ENCODE measurements at regions of chr14 and their contacts with region 1.

Region 1: GRCh38 chr14:52835122-52835903 is 43.9 kb upstream of the GNPNAT1 start:
- DNase-seq: peak; percentile 67
- ATAC-seq: peak; percentile 93
- H3K4me3 ChIP-seq: no peak overlapping the region
- H3K27ac ChIP-seq: peak overlapping the region; percentile 33
- H3K4me1 ChIP-seq: peaks cover 24% of the 10 kb centered on the region
- H3K27me3 ChIP-seq: no peaks in the 10 kb centered on the region
- CTCF ChIP-seq: no peak

Region 2: DNA sequence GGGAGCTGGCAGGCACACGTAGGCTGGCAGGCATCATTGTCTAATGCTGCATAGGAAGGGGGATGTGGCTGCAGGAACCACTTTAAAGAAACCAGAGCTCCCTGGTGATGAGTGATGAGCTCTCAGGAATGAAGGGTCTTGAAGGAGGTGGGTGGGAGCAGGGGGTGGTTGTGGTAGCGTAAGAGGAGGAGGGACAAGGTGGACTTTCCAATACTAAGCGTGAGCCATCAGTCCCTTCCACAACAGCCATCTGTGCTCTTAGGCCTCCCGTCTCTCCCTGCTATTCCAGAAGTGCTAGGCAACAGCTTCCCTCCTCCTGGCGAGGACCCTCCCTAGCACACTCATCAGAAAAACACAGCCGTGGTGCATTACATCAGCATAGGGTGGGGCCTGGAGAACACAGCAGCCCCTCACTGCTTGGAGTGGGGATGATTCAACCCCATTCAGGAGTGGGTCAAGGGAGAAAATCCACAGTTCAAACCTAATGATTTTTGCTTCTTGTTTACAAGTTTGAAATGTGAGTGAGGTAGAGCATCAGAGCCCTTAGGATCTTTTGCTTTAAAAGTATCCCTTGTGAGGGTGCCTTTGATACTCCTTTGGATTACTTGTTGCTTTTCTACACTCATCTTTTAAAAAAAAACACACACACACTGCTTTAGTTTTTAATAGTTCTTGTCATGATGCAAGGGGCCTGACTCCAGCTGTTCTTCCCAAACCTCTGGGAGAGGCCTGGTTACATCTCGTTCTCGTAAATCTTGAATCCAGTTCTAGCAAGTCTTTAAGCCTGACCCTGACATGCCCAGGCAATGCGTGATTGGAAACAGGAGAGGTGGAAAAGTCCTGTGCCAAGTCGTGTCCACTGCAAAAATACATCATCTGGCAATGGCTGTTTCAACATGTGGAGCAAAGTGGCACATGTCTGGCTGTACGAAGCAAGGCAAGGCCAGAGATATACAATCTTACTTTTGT is 674.2 kb after region 1 on chr14:
- CTCF ChIA-PET with region 1: no interaction called
- POLR2A ChIA-PET with region 1: no interaction called
- intact Hi-C with region 1: loop called (anchors 5 kb)
- DNase-seq: peak; percentile 7
- ATAC-seq: peak; percentile 50
- H3K4me3 ChIP-seq: no peak overlapping the region
- H3K27ac ChIP-seq: no peak overlapping the region
- H3K4me1 ChIP-seq: no peaks in the 10 kb centered on the region
- H3K27me3 ChIP-seq: no peaks in the 10 kb centered on the region
- CTCF ChIP-seq: no peak

Region 3: DNA sequence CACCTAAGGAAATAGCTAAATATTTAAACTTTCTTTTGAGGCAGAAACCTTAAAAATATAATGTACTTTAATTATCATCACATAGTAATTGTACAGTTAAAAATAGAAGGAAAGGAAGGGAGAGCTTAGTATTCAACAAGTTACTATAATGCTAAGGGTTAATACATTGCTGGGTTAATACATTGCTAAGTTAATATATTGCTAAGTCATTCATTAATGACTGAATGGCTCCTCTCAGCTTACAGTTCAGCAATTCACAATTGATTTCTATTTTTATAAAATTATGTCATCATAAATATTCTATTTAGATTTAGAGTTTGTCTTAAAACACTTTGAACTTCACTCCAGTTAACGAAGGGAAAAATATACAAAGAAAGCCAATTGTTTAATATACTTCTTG is 913.4 kb after region 1 on chr14:
- CTCF ChIA-PET with region 1: no interaction called
- POLR2A ChIA-PET with region 1: no interaction called
- intact Hi-C with region 1: no loop called
- DNase-seq: no peak
- ATAC-seq: no peak
- H3K4me3 ChIP-seq: no peak overlapping the region
- H3K27ac ChIP-seq: no peak overlapping the region
- H3K4me1 ChIP-seq: no peaks in the 10 kb centered on the region
- H3K27me3 ChIP-seq: no peaks in the 10 kb centered on the region
- CTCF ChIP-seq: no peak

Measured in PC-3 (cell line).